Activated CD4-positive, alpha-beta memory T cell treated with anti-CD3 and anti-CD28 coated beads, Interleukin-2, amount 10 ng/mL, durations not matched to agents 7 days and 5 days (primary cell): ENCODE measurements at regions of chr15 and their contacts with region 1.

Region 1: DNA sequence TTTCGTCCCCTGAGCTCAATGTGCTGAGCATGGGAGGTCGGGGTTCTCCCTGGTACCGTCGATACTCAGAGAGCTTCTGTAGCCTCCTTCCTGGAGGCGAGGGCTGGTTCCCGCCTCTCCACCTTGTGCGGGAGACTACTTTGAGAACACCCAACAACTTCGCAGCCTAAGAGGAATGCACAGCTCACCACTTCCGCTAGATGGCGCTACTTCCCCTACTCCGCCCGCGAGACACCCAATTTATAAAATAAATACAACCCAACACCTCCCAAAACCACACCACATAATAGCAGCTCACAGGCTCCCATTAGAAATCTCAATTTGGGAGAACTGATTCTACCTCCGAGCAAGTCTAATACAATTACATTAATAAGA is 1.2 kb downstream of the RGMA start:
- DNase-seq: peak; percentile 81
- H3K4me3 Mint-ChIP-seq: peak overlapping the region; percentile 60
- H3K27ac Mint-ChIP-seq: no peak overlapping the region
- H3K4me1 Mint-ChIP-seq: peaks cover 14% of the 10 kb centered on the region
- H3K27me3 Mint-ChIP-seq: peaks cover 69% of the 10 kb centered on the region

Region 2: GRCh38 chr15:93030430-93031105 is 57.2 kb before region 1 on chr15:
- CTCF ChIA-PET with region 1: interaction called, 22 read pairs
- POLR2A ChIA-PET with region 1: no interaction called
- DNase-seq: peak; percentile 68
- H3K4me3 Mint-ChIP-seq: no peak overlapping the region
- H3K27ac Mint-ChIP-seq: no peak overlapping the region
- H3K4me1 Mint-ChIP-seq: peaks cover 15% of the 10 kb centered on the region
- H3K27me3 Mint-ChIP-seq: no peaks in the 10 kb centered on the region

Region 3: DNA sequence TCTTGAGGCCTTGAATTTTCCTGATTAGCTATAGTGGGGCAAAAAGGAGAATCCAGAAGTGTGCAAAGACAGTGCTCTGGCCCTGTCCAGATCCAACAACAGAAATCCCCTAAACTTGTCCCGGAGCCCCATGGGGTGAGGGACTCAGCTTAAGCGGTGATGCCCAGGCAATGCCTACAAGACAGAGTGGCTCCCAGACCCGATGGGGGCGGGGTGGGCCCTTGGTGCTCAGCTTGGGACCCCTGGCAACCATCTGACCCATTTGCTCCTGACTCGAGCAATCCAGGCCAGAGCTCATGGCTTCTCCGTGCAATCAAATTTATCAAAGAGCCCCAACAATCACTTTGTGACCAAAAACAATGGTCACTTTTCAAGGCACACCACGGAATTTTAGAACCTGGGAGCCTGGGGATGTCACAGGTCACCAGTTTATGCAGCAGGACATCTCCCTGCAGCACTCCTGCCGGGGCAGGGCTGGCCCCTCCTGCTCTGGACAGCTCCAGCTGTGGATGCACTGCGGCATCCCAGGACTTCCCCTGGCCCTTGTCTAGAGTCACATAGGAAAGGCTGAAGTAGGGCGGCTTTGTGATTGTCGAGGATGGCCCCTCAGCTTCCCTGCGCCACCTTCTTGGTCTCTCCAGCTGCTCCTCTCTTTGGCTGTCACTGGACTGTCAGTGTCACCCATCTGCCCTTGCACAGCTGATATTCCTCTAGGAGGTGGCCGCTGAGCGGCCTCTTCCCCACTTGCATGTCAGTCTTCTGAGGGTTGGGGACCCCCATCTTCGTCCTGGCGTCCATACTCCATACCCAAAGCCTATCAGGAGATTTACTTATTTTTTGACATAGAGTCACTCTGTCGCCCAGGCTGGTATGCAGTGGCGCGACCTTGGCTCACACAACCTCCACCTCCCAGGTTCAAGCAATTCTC is 27.2 kb before region 1 on chr15:
- CTCF ChIA-PET with region 1: interaction called, 11 read pairs
- POLR2A ChIA-PET with region 1: no interaction called
- DNase-seq: no peak
- H3K4me3 Mint-ChIP-seq: no peak overlapping the region
- H3K27ac Mint-ChIP-seq: no peak overlapping the region
- H3K4me1 Mint-ChIP-seq: no peaks in the 10 kb centered on the region
- H3K27me3 Mint-ChIP-seq: peaks cover 8% of the 10 kb centered on the region

Region 4: DNA sequence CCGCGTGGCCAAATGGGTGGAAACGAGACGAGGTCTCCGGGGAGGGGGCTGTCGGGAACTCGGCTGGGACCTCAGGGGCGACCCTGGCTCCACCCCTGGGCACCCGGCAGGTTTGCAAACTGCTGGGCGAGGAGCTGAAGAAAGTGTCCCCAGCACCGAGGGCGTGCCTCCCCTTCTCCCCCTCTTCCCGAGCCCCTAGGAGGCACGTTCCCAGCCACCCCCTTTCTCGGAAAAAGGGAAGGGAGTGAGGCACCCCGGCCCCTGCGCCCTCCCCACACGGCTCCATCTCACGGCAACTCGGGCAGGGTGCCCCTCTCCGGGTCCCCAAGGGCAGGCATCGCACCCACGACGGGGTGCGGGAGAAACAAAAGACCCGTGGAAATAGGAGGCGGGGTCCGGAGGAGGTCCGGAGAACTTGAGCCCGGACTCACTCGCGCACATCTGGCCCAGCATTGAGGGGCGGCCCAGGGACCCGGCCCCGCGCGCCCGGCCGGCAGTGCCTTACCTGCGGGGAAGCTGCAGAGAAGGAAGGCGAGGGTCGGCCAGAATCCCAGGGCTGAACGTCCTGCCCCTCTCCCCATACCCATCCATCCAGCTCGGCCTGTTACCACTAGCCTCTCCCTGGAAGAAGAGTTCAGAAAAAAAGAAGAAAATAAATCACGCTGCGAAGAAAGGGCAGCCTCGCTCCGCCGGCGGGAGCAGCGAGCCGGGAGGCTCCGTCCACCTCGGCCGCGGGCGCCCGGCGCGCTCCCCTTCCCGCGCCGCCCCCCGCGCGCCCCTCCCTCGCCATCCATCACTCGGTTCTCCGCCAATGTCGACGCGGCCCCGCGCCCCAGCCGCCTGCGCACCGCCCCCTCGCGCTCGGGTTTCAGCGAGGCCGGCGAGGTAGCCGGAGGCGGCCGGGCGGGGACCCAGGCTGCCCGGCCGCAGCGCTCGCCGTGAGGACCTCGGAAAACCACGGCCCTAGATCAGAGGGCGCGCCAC is 15.1 kb before region 1 on chr15:
- CTCF ChIA-PET with region 1: interaction called, 25 read pairs
- POLR2A ChIA-PET with region 1: no interaction called
- DNase-seq: no peak
- H3K4me3 Mint-ChIP-seq: no peak overlapping the region
- H3K27ac Mint-ChIP-seq: no peak overlapping the region
- H3K4me1 Mint-ChIP-seq: peaks cover 13% of the 10 kb centered on the region
- H3K27me3 Mint-ChIP-seq: peaks cover 59% of the 10 kb centered on the region

Region 5: GRCh38 chr15:93152951-93153350 is 65.1 kb after region 1 on chr15:
- CTCF ChIA-PET with region 1: interaction called, 11 read pairs
- POLR2A ChIA-PET with region 1: no interaction called
- DNase-seq: no peak
- H3K4me3 Mint-ChIP-seq: no peak overlapping the region
- H3K27ac Mint-ChIP-seq: peak overlapping the region; percentile 45
- H3K4me1 Mint-ChIP-seq: peaks cover 20% of the 10 kb centered on the region
- H3K27me3 Mint-ChIP-seq: peaks cover 15% of the 10 kb centered on the region

Region 6: GRCh38 chr15:94119923-94120775 is 1032.3 kb after region 1 on chr15:
- CTCF ChIA-PET with region 1: interaction called, 24 read pairs
- POLR2A ChIA-PET with region 1: no interaction called
- DNase-seq: peak; percentile 62
- H3K4me3 Mint-ChIP-seq: no peak overlapping the region
- H3K27ac Mint-ChIP-seq: no peak overlapping the region
- H3K4me1 Mint-ChIP-seq: peaks cover under 1% of the 10 kb centered on the region
- H3K27me3 Mint-ChIP-seq: peaks cover 1% of the 10 kb centered on the region